ENCODE measurements at regions of chr3 and their contacts with region 1.

Region 1: GRCh38 chr3:72818092-72818773 is 30.0 kb downstream of the SHQ1 start:
- DNase-seq: no peak
- H3K4me3 Mint-ChIP-seq: no peak overlapping the region
- H3K27ac Mint-ChIP-seq: no peak overlapping the region
- H3K4me1 Mint-ChIP-seq: peaks cover 3% of the 10 kb centered on the region
- H3K27me3 Mint-ChIP-seq: no peaks in the 10 kb centered on the region

Region 2: DNA sequence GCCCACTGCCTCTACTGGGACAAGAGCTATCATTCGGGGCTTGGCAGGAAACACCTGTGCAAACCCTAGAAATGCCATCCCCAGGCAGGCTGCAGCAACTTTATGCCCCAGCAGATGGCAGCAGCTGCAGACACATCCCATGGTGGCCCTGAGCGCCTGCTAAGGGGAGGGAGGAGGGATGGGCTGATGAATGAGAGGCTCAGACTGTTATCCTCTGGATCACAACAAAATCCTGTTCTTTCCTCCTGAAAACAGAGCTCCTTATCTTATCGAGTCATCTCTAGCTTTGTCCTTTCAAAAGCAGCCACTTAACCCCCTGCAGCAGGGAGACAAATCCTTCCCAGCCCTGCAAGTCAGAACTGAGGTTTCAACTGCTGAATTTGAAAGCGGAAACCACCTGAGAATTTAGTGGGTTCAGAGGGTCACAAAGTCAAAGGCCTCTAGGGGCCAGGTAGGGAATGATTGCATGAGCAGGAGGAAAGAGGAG is 942.7 kb before region 1 on chr3:
- CTCF ChIA-PET with region 1: interaction called, 63 read pairs
- DNase-seq: peak; percentile 85
- H3K4me3 Mint-ChIP-seq: no peak overlapping the region
- H3K27ac Mint-ChIP-seq: no peak overlapping the region
- H3K4me1 Mint-ChIP-seq: peaks cover 21% of the 10 kb centered on the region
- H3K27me3 Mint-ChIP-seq: no peaks in the 10 kb centered on the region

Region 3: GRCh38 chr3:71926262-71926600 is 892.0 kb before region 1 on chr3:
- CTCF ChIA-PET with region 1: interaction called, 18 read pairs
- DNase-seq: peak; percentile 40
- H3K4me3 Mint-ChIP-seq: no peak overlapping the region
- H3K27ac Mint-ChIP-seq: no peak overlapping the region
- H3K4me1 Mint-ChIP-seq: no peaks in the 10 kb centered on the region
- H3K27me3 Mint-ChIP-seq: peaks cover 6% of the 10 kb centered on the region

Region 4: DNA sequence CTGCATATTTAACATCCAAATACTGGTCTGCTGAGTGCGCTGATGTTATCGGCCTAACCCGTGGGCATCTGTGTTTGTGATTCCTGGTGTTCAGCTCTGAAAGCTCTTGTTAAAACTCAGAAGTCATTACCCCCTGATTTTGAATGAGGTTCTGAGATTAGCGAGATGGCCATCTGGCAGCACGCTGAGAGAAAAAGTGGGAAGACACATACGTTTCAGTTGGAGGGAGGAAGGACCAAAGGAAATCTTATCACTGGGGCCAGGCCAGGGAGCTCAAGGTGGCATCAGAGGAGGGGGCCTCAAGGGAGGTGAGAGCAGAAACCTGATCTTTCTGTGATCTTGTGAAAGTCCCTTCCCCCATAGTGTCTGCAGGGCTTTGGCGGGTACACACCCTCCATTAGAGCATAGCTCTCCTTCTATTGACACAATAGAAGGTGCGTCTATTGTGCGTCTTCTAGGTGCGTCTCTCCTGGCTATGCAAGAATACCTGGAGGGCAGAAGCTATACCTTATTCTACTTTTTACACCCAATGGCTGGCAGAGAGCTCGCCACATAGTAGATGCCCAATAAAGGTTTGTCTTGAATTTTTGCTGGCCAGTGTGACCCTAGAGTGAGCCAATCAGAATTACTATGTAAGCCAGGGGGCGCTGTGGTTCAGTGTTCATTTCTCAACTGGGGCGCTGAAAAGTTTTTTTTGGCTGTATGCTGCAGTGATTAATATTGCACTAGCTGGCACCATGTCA is 152.4 kb before region 1 on chr3:
- CTCF ChIA-PET with region 1: interaction called, 117 read pairs
- DNase-seq: peak; percentile 71
- H3K4me3 Mint-ChIP-seq: no peak overlapping the region
- H3K27ac Mint-ChIP-seq: no peak overlapping the region
- H3K4me1 Mint-ChIP-seq: no peaks in the 10 kb centered on the region
- H3K27me3 Mint-ChIP-seq: no peaks in the 10 kb centered on the region

Region 5: GRCh38 chr3:72690629-72691028 is 127.6 kb before region 1 on chr3:
- CTCF ChIA-PET with region 1: no interaction called
- DNase-seq: no peak
- H3K4me3 Mint-ChIP-seq: no peak overlapping the region
- H3K27ac Mint-ChIP-seq: no peak overlapping the region
- H3K4me1 Mint-ChIP-seq: no peaks in the 10 kb centered on the region
- H3K27me3 Mint-ChIP-seq: peaks cover 4% of the 10 kb centered on the region

Region 6: GRCh38 chr3:72738752-72739530 is 79.3 kb before region 1 on chr3:
- CTCF ChIA-PET with region 1: interaction called, 13 read pairs
- DNase-seq: peak; percentile 80
- H3K4me3 Mint-ChIP-seq: peak overlapping the region; percentile 82
- H3K27ac Mint-ChIP-seq: peak overlapping the region; percentile 91
- H3K4me1 Mint-ChIP-seq: peaks cover 30% of the 10 kb centered on the region
- H3K27me3 Mint-ChIP-seq: peaks cover 10% of the 10 kb centered on the region

Region 7: GRCh38 chr3:73086071-73086494 is 267.9 kb after region 1 on chr3:
- CTCF ChIA-PET with region 1: interaction called, 16 read pairs
- DNase-seq: peak; percentile 55
- H3K4me3 Mint-ChIP-seq: no peak overlapping the region
- H3K27ac Mint-ChIP-seq: no peak overlapping the region
- H3K4me1 Mint-ChIP-seq: peaks cover 7% of the 10 kb centered on the region
- H3K27me3 Mint-ChIP-seq: peaks cover 4% of the 10 kb centered on the region

Measured in activated naive CD4-positive, alpha-beta T cell treated with anti-CD3 and anti-CD28 coated beads, Interleukin-2, amount 10 ng/mL, durations not matched to agents 7 days and 5 days (primary cell).